Activated CD4-positive, alpha-beta T cell treated with anti-CD3 and anti-CD28 coated beads for 36 hours (primary cell): ENCODE measurements at regions of chr22 and their contacts with region 1.

Region 1: DNA sequence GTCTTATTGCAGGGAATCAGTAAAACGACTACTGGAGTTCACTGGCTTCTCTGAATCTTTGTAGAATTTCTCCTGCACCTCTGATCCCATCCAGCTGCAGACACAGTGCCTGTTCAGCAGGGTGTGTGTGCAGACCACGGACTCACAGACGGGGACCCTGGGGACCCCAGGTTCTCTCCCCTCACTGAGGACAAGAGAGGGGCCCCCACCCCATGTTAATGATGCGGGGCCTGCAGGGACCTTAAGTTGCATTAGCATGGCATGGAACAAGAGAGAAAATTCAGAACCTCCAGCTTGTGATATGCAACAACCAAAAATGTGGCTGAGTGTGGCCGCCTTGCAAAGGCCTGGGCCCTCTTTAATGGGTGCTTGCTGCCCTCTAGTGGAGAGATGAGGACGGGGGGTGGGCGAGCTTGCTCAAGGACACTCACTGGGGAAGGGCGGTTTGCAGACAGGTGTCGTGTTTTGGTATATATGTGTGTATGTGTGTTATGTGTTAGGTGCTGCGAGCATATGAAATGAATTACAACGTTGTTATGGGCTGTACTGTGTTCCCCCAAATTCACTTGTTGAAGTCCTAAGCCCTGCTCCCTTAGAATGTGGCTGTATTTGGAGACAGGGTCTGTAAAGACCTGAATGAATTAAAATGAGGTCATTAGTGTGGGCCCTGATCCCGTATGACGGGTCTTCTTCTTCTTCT is 84.4 kb upstream of the SEPTIN5 start:
- DNase-seq: peak; percentile 93
- ATAC-seq: peak; percentile 96
- H3K4me3 Mint-ChIP-seq: no peak overlapping the region
- H3K27ac Mint-ChIP-seq: no peak overlapping the region
- H3K4me1 Mint-ChIP-seq: peaks cover 5% of the 10 kb centered on the region
- H3K27me3 Mint-ChIP-seq: no peaks in the 10 kb centered on the region

Region 2: DNA sequence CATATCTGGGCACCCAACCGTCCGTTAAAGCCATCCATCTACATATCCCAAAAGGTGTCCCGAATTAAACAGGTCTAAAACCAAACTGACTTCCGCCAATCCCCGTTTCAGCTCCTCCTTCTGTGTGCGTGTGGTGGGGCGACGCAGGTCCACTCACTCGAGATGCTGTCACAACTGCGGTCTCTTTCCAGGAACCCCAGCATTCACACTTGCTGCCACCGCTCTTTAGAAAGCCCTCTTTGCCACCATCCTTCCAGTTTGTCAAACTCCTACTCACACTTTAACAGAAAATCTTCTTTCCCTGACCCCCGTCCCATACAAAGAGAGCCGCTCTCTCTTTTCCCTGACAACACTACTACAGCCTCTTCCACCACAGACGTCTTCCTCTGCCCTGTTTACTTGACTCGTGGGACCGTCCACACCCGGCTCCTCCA is 485.9 kb before region 1 on chr22:
- CTCF ChIA-PET with region 1: interaction called, 5 read pairs
- POLR2A ChIA-PET with region 1: no interaction called
- intact Hi-C with region 1: loop called (anchors 1 kb)
- DNase-seq: peak; percentile 69
- ATAC-seq: peak; percentile 37
- H3K4me3 Mint-ChIP-seq: peak overlapping the region; percentile 95
- H3K27ac Mint-ChIP-seq: peak overlapping the region; percentile 96
- H3K4me1 Mint-ChIP-seq: peaks cover 18% of the 10 kb centered on the region
- H3K27me3 Mint-ChIP-seq: peaks cover 5% of the 10 kb centered on the region

Region 3: GRCh38 chr22:19167106-19167869 is 462.6 kb before region 1 on chr22:
- CTCF ChIA-PET with region 1: no interaction called
- POLR2A ChIA-PET with region 1: no interaction called
- intact Hi-C with region 1: no loop called
- DNase-seq: no peak
- ATAC-seq: no peak
- H3K4me3 Mint-ChIP-seq: no peak overlapping the region
- H3K27ac Mint-ChIP-seq: no peak overlapping the region
- H3K4me1 Mint-ChIP-seq: peaks cover 15% of the 10 kb centered on the region
- H3K27me3 Mint-ChIP-seq: peaks cover 32% of the 10 kb centered on the region

Region 4: DNA sequence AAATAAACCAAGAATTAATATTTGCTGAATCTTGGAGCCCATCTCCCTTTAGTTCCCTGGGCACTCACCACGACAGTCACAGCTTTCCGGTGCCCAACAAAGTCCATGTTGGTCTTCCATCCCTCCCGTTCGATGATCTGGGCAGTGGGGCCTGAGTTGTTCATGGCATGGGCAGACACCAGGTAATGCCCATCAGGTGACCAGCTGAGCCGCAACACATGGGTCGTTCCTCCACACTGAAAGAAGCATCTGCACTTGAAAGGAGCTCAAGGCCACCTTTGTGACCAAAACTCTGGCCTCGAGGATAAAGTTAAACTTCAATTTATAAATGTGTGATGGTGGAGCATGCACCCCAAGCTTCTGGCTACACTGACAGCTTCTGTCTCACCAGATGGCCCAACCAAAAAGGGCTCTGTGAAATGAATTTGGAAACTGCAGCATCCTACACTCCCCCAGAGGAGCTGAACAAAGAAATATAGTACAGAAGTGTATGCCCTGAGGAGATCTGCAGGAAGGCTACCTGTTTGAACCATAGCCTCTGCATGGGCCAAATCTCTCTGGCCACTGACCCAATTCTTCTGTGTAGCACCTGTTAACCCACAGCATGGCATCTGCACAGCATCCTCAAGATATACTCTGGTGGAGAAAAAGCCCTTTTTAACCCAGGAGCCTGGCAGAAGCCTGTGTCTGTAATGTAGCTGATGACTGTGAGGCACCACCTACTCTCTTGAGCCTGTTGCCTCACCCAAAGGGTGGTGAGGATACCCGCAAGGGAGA is 235.4 kb before region 1 on chr22:
- CTCF ChIA-PET with region 1: interaction called, 3 read pairs
- POLR2A ChIA-PET with region 1: no interaction called
- intact Hi-C with region 1: loop called in 1 of 2 experiments (anchors 5 kb)
- DNase-seq: no peak
- ATAC-seq: no peak
- H3K4me3 Mint-ChIP-seq: no peak overlapping the region
- H3K27ac Mint-ChIP-seq: no peak overlapping the region
- H3K4me1 Mint-ChIP-seq: no peaks in the 10 kb centered on the region
- H3K27me3 Mint-ChIP-seq: no peaks in the 10 kb centered on the region

Region 5: GRCh38 chr22:19495562-19496323 is 134.1 kb before region 1 on chr22:
- CTCF ChIA-PET with region 1: interaction called, 6 read pairs
- POLR2A ChIA-PET with region 1: interaction called, 3 read pairs
- intact Hi-C with region 1: loop called in 1 of 2 experiments (anchors 2 kb)
- DNase-seq: no peak
- ATAC-seq: no peak
- H3K4me3 Mint-ChIP-seq: no peak overlapping the region
- H3K27ac Mint-ChIP-seq: no peak overlapping the region
- H3K4me1 Mint-ChIP-seq: peaks cover 19% of the 10 kb centered on the region
- H3K27me3 Mint-ChIP-seq: no peaks in the 10 kb centered on the region

Region 6: DNA sequence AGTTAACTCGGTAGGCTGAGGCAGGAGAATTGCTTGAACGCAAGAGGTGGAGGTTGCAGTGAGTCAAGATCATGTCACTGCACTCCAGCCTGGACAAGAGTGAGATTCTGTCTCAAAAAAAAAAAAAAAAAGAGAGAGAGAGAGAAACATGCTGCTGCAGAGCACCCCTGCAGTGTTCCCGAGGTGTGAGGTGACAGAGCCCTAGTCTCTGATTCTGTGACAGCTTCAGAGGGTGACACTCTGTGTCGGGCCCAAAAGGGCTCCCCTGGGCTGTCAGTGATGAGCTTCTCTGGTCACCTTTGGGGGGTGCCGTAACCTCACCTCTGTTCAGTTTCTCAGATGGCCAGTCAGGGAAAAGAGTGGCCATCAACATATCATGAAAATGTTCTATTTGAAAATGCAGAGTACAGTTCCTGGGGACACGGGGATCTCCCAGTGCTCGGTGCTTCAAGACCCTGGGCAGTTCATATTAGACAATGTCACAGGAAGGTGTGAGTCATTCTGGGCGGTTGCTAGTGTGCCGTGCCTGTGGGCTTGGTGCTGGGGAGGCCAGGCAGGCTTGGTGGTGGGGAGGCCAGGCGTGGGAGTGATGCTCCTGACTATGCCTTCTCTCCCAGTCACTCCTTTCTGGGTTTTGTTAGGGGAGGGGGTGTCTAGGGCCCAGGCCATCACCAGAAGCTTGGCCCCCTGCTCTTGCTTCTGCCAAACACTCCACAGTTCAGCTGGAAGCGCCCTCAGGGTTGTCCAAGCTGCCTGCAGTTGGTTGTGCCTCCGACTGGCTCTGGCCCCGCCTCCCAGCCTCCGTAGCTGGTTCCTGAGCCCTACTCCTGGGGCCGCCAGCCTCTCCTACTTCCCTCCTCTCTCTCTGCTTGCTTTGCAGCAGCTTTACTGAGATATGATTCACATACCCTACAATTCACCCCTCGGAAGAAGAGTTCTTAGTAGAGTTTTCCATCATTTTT is 53.1 kb before region 1 on chr22:
- CTCF ChIA-PET with region 1: no interaction called
- POLR2A ChIA-PET with region 1: no interaction called
- intact Hi-C with region 1: loop called in 1 of 2 experiments (anchors 2 kb)
- DNase-seq: peak; percentile 86
- ATAC-seq: peak; percentile 88
- H3K4me3 Mint-ChIP-seq: peak overlapping the region; percentile 22
- H3K27ac Mint-ChIP-seq: peak overlapping the region; percentile 91
- H3K4me1 Mint-ChIP-seq: peaks cover 45% of the 10 kb centered on the region
- H3K27me3 Mint-ChIP-seq: no peaks in the 10 kb centered on the region